Activated T-helper 1 cell treated with anti-CD3 and anti-CD28 coated beads, Interleukin-12 subunit alpha, Interleukin-12 subunit beta, Interleukin-2, Interleukin-4 antibody, amounts not matched to agents 30 ng/mL and 10 ng/mL and 1 ng/mL, durations not matched to agents 14 hours and 24 hours and 36 hours (primary cell): ENCODE measurements at regions of chr2 and their contacts with region 1.

Region 1: GRCh38 chr2:191020221-191020741 is 6.3 kb upstream of the STAT1 start:
- DNase-seq: peak; percentile 96
- H3K4me3 Mint-ChIP-seq: no peak overlapping the region
- H3K27ac Mint-ChIP-seq: no peak overlapping the region
- H3K4me1 Mint-ChIP-seq: peaks cover 45% of the 10 kb centered on the region
- H3K27me3 Mint-ChIP-seq: peaks cover 2% of the 10 kb centered on the region

Region 2: DNA sequence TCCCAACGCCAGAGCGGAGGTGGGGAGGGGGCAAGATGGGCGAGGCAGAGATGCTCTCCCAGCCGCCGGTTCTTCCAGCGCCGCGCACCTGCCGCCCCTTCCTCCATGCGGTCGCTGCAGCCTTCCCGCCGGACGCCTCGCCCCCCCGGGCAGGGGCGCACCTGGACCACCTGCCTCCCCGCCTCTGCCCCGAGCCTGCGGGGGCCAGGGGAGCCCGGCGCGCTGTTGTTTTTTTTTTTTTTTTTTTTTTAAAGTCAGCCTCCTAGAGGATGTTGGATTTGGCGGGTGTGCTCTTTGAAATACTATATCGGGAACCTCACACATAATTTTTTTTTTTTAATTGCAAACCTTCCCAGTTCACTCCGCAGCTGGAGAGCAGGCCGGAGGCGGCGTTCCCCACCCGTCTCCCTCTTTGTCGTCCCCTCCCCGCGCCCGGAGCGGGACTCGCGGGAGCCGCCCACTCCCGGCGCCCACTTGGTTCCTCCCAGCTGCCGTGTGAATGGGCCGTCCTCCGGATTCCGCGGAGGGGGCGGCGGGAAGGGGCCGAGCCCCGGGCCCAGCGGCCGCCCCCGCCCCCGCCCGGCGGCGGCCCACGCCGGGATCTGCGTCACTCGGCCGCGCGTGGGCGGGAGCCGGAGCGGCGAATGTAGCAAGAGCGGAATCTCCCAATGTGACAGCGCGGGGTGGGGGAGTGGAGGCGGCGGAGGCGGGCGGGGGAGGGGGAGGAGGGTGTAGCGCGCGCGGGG is 371.8 kb before region 1 on chr2:
- intact Hi-C with region 1: loop called (anchors 5 kb)
- DNase-seq: peak; percentile 84
- H3K4me3 Mint-ChIP-seq: peak overlapping the region; percentile 78
- H3K27ac Mint-ChIP-seq: peak overlapping the region; percentile 82
- H3K4me1 Mint-ChIP-seq: peaks cover 48% of the 10 kb centered on the region
- H3K27me3 Mint-ChIP-seq: no peaks in the 10 kb centered on the region

Region 3: DNA sequence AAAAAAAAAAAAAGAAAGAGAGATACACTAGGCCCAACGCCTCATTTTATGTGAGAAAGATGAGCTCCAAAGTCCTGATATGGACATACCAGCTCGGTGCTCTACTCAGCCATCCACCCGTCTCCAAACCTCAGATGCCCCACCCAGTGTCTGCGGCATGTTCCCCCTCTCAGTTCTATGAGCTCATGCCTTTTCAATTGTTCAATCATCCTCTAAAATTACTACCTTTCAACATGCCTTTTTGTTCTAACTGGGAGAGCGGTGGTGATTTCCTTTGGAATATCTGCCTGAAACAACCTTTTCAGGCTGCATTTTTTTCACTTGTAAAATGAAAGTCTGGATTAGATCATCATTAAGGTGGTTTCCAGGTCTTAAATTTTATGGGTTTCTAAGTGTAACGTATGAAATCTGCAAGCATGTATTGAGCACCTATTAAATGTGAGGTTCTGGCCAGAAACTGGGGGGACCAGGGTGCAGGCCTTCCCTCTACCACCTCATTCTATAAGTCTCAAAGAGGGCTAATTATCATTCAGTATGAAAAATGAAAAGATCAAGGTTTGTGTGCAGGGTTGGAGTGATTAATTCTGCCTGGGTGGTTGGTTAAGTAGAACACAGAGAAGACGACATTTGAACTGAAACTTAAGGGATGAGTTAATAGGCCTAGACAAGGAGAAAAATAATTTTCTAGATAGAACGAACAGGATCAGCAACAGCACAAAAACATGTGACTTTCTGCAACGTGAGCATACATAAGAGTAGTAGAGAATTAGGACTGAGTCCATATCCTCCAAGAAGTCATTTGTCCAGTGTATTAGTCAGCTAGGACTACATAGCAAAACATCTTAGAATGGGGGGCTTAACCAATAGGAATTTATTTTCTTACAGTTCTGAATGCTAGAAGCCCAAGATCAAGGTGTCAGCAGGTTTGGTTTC is 227.1 kb before region 1 on chr2:
- intact Hi-C with region 1: no loop called
- DNase-seq: no peak
- H3K4me3 Mint-ChIP-seq: peak overlapping the region; percentile 13
- H3K27ac Mint-ChIP-seq: peak overlapping the region; percentile 83
- H3K4me1 Mint-ChIP-seq: peaks cover 71% of the 10 kb centered on the region
- H3K27me3 Mint-ChIP-seq: no peaks in the 10 kb centered on the region

Region 4: DNA sequence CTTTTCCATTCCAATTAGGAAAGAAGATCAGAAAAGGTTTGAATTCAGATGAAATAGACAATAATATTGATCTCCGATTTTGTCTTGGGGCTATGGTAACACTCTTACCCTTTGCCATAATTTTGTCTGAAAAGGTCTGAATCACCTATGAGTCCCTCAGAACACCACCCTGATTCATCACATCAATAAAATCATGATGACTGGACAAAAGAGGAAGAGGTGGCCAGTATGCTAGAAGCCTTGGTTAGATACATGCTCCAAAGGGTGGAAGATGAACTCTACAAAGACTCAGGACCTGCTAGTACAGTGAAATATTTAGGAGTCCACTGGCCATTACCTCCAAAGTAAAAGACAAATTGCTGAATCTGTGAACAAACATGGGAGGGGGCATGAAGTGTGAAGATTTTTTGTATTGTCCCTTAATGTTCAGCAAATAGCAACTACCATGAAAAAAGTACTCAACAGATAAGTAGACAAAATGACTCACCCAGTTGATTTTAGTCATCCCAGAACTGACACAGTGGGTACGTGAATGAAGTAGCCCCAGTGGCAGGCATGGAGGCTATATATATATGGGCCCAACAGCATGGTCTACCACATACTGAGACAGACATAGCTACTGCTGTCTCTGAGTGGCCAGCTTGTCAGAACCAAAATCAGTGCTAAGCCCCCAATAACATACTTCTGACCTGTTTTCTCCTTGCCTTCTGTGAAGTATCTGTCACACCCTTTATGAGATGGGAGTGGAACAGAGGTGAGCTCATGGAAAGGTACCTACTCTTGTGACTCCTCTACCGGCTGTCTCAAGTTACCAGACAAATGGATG is 176.2 kb before region 1 on chr2:
- intact Hi-C with region 1: loop called (anchors 1 kb)
- DNase-seq: peak; percentile 17
- H3K4me3 Mint-ChIP-seq: peak overlapping the region; percentile 44
- H3K27ac Mint-ChIP-seq: peak overlapping the region; percentile 96
- H3K4me1 Mint-ChIP-seq: peaks cover 15% of the 10 kb centered on the region
- H3K27me3 Mint-ChIP-seq: no peaks in the 10 kb centered on the region

Region 5: GRCh38 chr2:191038241-191038725 is 18.0 kb after region 1 on chr2:
- intact Hi-C with region 1: loop called (anchors 1 kb)
- DNase-seq: peak; percentile 61
- H3K4me3 Mint-ChIP-seq: peak overlapping the region; percentile 63
- H3K27ac Mint-ChIP-seq: peak overlapping the region; percentile 79
- H3K4me1 Mint-ChIP-seq: peaks cover 48% of the 10 kb centered on the region
- H3K27me3 Mint-ChIP-seq: no peaks in the 10 kb centered on the region

Region 6: DNA sequence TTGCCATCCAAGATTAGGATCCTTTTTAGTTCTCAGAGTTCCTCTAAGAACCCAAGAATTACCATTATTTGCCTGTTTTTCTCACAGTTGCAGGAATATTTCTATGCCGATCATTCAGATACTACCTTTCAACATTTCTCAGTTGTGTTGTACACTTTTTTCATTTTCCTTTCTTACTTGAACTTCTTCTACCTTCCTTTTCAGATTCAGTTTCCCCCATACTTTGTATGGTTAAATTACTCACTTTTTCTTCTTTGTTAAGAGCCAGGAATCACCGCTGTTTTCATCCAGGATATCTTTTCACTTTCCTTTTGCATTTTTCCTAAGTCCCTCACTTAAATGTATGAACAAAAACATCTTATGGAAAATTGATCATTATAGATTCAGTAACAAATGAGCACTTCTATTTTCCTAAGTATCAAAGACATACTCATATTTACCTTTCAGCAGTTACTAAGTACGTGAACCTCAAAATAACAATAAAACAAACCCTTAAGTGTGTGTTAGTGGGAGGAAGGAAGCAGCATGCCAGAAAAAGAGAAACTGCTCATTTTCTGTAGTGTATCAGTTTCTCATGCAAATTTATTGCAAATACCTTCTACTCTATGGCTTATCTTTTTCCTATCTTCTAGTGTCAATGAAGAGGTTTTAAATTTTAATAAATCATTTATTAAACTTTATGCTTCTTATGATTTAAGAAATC is 58.0 kb after region 1 on chr2:
- intact Hi-C with region 1: loop called (anchors 2 kb)
- DNase-seq: no peak
- H3K4me3 Mint-ChIP-seq: peak overlapping the region; percentile 60
- H3K27ac Mint-ChIP-seq: peak overlapping the region; percentile 89
- H3K4me1 Mint-ChIP-seq: peaks cover 31% of the 10 kb centered on the region
- H3K27me3 Mint-ChIP-seq: no peaks in the 10 kb centered on the region

Region 7: DNA sequence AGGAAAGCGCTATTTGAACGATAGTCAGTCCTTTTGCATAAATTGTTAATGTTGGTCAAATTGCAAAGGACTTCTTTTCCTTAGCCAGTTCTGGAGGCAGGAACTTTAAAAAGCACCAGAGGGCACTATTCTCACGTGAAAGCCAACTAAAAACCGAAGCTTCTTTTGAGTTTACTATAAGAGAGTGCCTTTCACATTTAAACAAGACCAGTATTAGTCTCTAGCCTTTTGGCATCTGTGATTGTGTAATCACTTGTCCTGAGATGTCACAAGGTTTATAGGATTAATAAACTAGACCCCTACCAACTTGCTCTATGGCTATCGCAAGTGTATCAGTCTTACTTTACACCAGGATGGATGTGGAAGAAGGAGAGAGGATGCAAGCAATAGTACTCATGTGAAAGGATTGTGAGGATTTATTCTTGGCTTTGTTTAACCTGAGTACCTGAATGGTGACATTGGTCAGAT is 144.9 kb after region 1 on chr2:
- intact Hi-C with region 1: no loop called
- DNase-seq: no peak
- H3K4me3 Mint-ChIP-seq: no peak overlapping the region
- H3K27ac Mint-ChIP-seq: no peak overlapping the region
- H3K4me1 Mint-ChIP-seq: peaks cover 25% of the 10 kb centered on the region
- H3K27me3 Mint-ChIP-seq: peaks cover 2% of the 10 kb centered on the region

Region 8: DNA sequence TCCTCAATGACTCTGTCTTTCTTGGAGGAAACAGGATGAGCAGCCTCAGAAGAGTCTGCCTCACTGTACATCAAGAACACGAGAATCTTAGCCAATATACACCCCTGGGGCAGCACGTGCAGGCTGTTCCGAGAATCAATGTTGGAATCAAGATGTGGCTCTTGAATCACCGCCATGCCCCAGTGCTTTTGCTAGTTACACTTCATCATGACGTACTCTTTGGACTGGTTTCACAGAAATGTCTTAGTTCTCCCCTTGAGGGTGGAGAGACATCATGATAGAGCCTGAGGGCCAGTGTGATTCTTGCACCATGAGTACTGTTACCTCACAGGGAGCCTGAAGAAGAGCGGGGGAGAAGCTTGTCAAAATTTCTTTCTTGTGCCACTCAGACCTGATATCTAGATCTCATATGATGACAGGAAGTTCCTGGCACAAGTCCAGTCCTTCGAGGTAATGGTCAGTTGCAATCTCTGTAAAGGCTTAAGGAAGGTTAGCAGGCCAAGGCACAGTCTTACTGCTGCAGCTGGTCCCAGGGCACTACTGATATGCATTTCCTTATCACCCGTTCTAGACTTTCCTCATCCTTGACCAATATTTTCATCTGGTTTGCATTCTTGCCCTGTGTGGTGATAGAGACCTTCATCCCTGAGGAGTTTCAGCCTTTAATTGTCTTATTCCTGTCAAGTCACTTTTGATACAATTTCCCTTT is 158.7 kb after region 1 on chr2:
- intact Hi-C with region 1: no loop called
- DNase-seq: no peak
- H3K4me3 Mint-ChIP-seq: no peak overlapping the region
- H3K27ac Mint-ChIP-seq: no peak overlapping the region
- H3K4me1 Mint-ChIP-seq: peaks cover 44% of the 10 kb centered on the region
- H3K27me3 Mint-ChIP-seq: no peaks in the 10 kb centered on the region

Region 9: GRCh38 chr2:191189112-191189635 is 168.9 kb after region 1 on chr2:
- intact Hi-C with region 1: loop called (anchors 1 kb)
- DNase-seq: no peak
- H3K4me3 Mint-ChIP-seq: no peak overlapping the region
- H3K27ac Mint-ChIP-seq: no peak overlapping the region
- H3K4me1 Mint-ChIP-seq: peaks cover 56% of the 10 kb centered on the region
- H3K27me3 Mint-ChIP-seq: no peaks in the 10 kb centered on the region

Region 10: DNA sequence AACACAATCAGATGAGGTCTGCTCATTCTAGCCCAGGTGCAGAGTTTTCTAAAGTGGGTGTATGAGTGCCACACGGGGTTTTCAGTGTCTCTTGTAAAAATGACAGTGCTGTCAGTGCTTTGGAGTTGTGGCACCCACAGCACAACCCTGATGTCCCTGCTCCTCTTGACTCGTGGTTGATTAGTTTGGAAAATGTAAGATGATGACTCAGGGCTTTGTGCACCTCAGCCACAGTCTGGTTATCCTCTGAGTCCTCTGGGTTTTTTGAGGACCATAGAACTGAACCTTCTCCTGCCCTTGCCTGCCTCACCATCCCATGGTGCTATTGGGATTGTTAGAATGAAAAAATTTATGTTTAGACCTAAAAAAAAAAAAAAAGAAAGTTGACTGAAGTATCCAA is 330.5 kb after region 1 on chr2:
- intact Hi-C with region 1: no loop called
- DNase-seq: no peak
- H3K4me3 Mint-ChIP-seq: no peak overlapping the region
- H3K27ac Mint-ChIP-seq: no peak overlapping the region
- H3K4me1 Mint-ChIP-seq: peaks cover 8% of the 10 kb centered on the region
- H3K27me3 Mint-ChIP-seq: no peaks in the 10 kb centered on the region